ENCODE measurements at regions of chr1 and their contacts with region 1.

Region 1: DNA sequence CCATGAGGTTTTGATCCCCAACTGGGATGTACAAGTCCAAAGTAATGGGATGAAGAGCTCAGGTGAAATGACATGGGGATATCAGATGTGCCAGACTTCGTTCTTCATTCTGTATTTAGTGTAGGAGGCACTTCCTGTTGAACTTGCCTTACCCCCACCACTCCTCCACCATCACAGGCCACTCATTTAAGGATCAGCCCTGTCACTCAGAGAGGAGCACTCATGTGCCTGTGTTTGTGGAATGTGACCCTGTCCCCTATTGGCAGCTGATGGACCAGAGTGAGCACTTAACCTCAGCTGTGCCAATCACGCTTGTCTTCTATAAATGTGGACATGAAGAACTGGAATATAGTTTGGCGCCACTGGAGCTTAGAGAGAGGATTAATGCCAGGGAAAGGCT is 91.4 kb upstream of the CTTNBP2NL start:
- DNase-seq: no peak
- H3K4me3 ChIP-seq: no peak overlapping the region
- H3K27ac ChIP-seq: no peak overlapping the region
- H3K4me1 ChIP-seq: no peaks in the 10 kb centered on the region
- CTCF ChIP-seq: no peak

Region 2: DNA sequence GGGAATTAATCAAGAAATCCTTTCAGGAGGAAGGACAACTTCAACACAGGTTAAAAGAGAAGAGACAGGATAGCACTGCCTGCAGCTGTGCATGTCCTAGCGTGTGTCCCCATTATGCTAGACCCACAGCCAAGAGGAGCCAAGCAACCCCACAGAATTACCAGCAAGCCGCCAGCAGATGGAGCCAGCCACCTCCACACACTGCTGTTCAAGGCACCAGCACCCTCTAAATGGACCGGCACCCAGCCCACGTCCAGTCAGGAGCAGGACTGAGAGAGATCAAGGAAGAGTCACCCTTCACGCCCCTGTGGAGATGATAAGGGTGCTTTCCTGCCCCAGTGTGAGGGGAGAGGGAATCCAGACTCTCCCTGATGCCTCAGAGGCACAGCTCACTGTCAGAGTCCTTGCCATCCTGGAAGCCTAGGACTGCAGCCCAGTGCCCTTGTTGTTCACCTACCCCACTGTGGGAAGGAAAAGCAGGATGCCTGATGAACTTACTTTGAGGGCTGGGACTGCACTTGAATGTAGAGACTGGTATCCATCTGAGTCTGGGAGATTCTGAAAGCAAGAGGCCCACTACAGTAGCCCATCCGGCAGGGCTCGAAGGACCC is 54.3 kb after region 1 on chr1:
- CTCF ChIA-PET with region 1: no interaction called
- POLR2A ChIA-PET with region 1: no interaction called
- intact Hi-C with region 1: no loop called
- DNase-seq: peak; percentile 43
- H3K4me3 ChIP-seq: no peak overlapping the region
- H3K27ac ChIP-seq: no peak overlapping the region
- H3K4me1 ChIP-seq: no peaks in the 10 kb centered on the region
- CTCF ChIP-seq: peak; percentile 85

Region 3: GRCh38 chr1:112369392-112370285 is 65.0 kb after region 1 on chr1:
- CTCF ChIA-PET with region 1: no interaction called
- POLR2A ChIA-PET with region 1: no interaction called
- intact Hi-C with region 1: loop called (anchors 5 kb)
- DNase-seq: peak; percentile 79
- H3K4me3 ChIP-seq: no peak overlapping the region
- H3K27ac ChIP-seq: no peak overlapping the region
- H3K4me1 ChIP-seq: no peaks in the 10 kb centered on the region
- CTCF ChIP-seq: peak; percentile 94

Measured in OCI-LY7 (cell line).